CD4-positive, alpha-beta memory T cell (primary cell): ENCODE measurements at regions of chr2 and their contacts with region 1.

Region 1: DNA sequence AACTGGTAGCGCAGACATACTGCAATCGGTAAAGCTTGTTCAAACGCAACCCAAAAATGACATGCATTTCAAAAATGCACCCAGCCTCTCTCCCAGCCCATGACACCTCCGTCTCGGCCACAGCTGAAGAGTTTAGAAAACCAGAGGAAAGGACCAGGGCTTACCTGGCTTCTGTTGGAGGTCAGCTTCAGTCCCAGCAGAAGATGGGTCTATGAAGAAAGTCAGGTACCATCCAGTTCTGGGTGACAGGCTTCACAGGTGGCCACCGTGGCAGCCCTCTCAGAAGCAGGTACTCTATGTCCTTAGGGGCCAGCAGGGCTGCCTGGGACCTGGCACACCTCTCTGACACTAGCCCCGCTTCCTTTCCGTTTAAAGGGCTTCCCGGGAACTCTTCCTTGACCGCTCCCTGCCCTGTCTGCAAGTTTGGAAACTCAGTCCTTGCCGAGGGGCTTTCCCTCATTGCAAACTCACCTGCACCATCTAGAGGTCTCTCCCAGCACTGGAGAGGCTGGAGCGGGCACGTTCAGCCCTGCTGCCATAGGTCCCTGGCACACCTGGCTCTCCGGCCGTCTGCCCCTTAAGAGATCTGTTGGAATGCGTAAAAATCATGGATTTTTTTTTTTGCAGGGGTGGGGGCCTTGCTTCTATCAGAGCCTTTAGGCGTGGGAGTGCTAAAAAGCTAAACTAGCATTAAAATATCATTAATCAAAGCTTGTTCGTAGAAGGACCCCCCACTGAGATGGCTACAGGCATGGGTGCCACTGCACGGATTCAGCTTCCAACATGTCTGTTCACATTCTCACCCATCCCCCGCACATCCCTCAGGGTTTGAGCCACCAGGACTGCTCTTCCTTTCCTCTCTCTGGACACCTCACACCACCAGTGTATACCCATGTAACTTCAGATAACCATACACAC is at the start of gene EDAR:
- DNase-seq: peak in 4 of 5 donors; percentile 42 to 55 (median 48)
- H3K4me3 ChIP-seq: peak within 1 kb of the TSS; percentile 19 to 26
- H3K4me3 Mint-ChIP-seq: peak within 1 kb of the TSS; percentile 85 to 95 (median 88)
- H3K27ac ChIP-seq: no peak within 1 kb of the TSS
- H3K27ac Mint-ChIP-seq: peak within 1 kb of the TSS; percentile 16 to 90 (median 77)
- H3K4me1 ChIP-seq: peaks cover 29% of the 10 kb centered on the region
- H3K4me1 Mint-ChIP-seq: peaks cover 21 to 43% (median 33%) of the 10 kb centered on the region in 4 donors
- H3K27me3 ChIP-seq: no peaks in the 10 kb centered on the region
- H3K27me3 Mint-ChIP-seq: peaks cover 0 to 7% of the 10 kb centered on the region in 2 donors
- total RNA-seq, gene EDAR: 5.8 to 6.3 TPM

Region 2: DNA sequence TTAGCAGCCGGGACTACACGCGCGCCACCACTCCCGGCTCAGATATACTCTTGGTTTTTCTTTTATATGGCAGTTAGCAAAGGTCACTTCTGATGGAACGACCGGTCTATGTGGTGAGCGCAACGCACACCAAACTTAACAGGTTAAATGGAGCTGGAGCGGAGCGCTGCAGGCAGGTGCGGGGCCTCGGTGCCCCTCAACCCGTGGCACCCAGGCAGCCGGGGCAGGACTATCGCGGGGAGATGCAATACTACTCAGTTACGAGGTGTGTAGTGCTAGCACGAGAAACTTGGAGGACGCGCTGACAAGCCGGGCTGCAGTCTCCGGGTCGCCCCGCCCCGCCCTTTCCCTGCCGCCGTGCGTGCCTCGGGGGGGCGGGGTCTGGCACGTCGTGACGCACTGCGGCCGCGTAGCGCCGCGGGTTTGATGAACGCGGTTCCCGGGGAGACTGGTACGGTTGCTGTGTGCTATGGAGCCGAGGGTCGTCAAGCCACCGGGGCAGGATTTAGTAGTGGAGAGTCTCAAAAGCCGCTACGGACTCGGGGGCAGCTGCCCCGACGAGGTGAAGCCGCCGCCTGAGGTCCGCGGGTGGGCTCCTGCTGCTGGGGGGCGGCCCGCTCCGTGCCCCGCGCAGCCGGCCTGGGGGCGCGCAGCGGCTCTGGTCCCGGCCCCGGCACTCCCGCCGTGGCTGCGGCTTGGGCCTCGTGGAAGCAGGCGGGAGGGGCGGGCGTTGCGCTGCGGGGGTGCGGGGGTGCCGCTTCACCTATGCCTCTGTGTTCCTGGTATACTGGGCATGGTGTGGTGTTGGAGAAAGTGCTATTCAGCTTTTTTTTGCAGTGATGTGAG is 202.5 kb before region 1 on chr2 and contains the start of gene CCDC138:
- CTCF ChIA-PET with region 1: no interaction called
- POLR2A ChIA-PET with region 1: no interaction called
- intact Hi-C with region 1: loop called (anchors 1 kb)
- DNase-seq: peak; percentile 89 to 91 (median 90)
- H3K4me3 ChIP-seq: peak within 1 kb of the TSS; percentile 37 to 78
- H3K4me3 Mint-ChIP-seq: peak within 1 kb of the TSS; percentile 93 to 100 (median 99)
- H3K27ac ChIP-seq: peak within 1 kb of the TSS; percentile 78
- H3K27ac Mint-ChIP-seq: peak within 1 kb of the TSS; percentile 80 to 99 (median 98)
- H3K4me1 ChIP-seq: peaks cover 15% of the 10 kb centered on the region
- H3K4me1 Mint-ChIP-seq: peaks cover 9 to 20% (median 11%) of the 10 kb centered on the region in 4 donors
- H3K27me3 ChIP-seq: no peaks in the 10 kb centered on the region
- H3K27me3 Mint-ChIP-seq: no peaks in the 10 kb centered on the region
- total RNA-seq, gene CCDC138: 4.2 to 4.9 TPM

Region 3: GRCh38 chr2:108927936-108928659 is 61.0 kb before region 1 on chr2:
- CTCF ChIA-PET with region 1: interaction called, 104 read pairs
- POLR2A ChIA-PET with region 1: interaction called, 4 read pairs
- intact Hi-C with region 1: loop called (anchors 1 kb)
- DNase-seq: peak in 4 of 5 donors; percentile 41 to 52 (median 46)
- H3K4me3 ChIP-seq: no peak overlapping the region
- H3K4me3 Mint-ChIP-seq: no peak overlapping the region
- H3K27ac ChIP-seq: no peak overlapping the region
- H3K27ac Mint-ChIP-seq: peak overlapping the region in 1 of 7 donors; percentile 2
- H3K4me1 ChIP-seq: peaks cover 7% of the 10 kb centered on the region
- H3K4me1 Mint-ChIP-seq: peaks cover 4 to 14% (median 7%) of the 10 kb centered on the region in 4 donors
- H3K27me3 ChIP-seq: no peaks in the 10 kb centered on the region
- H3K27me3 Mint-ChIP-seq: no peaks in the 10 kb centered on the region

Region 4: GRCh38 chr2:108978709-108979111 is 10.3 kb before region 1 on chr2:
- CTCF ChIA-PET with region 1: interaction called, 13 read pairs
- POLR2A ChIA-PET with region 1: no interaction called
- intact Hi-C with region 1: no loop called
- DNase-seq: no peak
- H3K4me3 ChIP-seq: no peak overlapping the region
- H3K4me3 Mint-ChIP-seq: no peak overlapping the region
- H3K27ac ChIP-seq: no peak overlapping the region
- H3K27ac Mint-ChIP-seq: peak overlapping the region in 2 of 7 donors; percentile 42 to 52
- H3K4me1 ChIP-seq: peaks cover 21% of the 10 kb centered on the region
- H3K4me1 Mint-ChIP-seq: peaks cover 13 to 61% (median 41%) of the 10 kb centered on the region in 4 donors
- H3K27me3 ChIP-seq: no peaks in the 10 kb centered on the region
- H3K27me3 Mint-ChIP-seq: no peaks in the 10 kb centered on the region

Region 5: GRCh38 chr2:109062859-109063700 is 74.0 kb after region 1 on chr2:
- CTCF ChIA-PET with region 1: no interaction called
- POLR2A ChIA-PET with region 1: no interaction called
- intact Hi-C with region 1: loop called (anchors 1 kb)
- DNase-seq: peak in 3 of 5 donors; percentile 6 to 19 (median 8)
- H3K4me3 ChIP-seq: no peak overlapping the region
- H3K4me3 Mint-ChIP-seq: peak overlapping the region in 5 of 8 donors; percentile 4 to 44 (median 20)
- H3K27ac ChIP-seq: no peak overlapping the region
- H3K27ac Mint-ChIP-seq: peak overlapping the region in 1 of 7 donors; percentile 24
- H3K4me1 ChIP-seq: peaks cover 6% of the 10 kb centered on the region
- H3K4me1 Mint-ChIP-seq: peaks cover 4 to 16% (median 10%) of the 10 kb centered on the region in 4 donors
- H3K27me3 ChIP-seq: no peaks in the 10 kb centered on the region
- H3K27me3 Mint-ChIP-seq: peaks cover 1 to 3% of the 10 kb centered on the region in 2 donors